HEK293 (cell line): ENCODE measurements at regions of chr1 and their contacts with region 1.

Region 1: DNA sequence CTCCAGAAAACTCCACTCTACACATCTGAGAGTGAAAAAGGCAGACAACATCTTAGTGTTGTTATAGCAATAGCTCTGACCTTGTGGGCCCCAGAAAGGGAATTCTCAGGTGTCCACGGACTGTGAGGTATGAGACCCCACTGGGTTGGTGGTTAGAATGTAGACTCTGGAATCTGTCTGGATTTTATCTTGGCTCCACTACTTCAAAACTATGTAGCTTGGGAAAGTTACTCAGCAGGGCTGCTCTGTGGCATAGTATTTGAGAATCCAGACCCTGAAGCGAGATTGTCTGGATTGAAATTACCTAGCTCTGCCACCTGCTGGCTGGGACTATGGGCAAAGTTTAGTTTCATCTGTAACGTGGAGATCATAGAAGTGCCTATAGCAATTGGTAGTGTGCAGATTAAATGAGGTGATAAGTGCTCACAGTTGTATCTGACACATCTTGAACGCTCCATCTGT is 25.8 kb downstream of the PRDM2 start:
- H3K4me3 ChIP-seq: no peak overlapping the region
- H3K27ac ChIP-seq: no peak overlapping the region
- H3K4me1 ChIP-seq: peaks cover 8% of the 10 kb centered on the region; the same call in 1 of the 2 replicates
- CTCF ChIP-seq: peak; percentile 19; the same call in 1 of the 2 replicates

Region 2: GRCh38 chr1:13487143-13487868 is 238.4 kb before region 1 on chr1:
- CTCF ChIA-PET with region 1: no interaction called
- POLR2A ChIA-PET with region 1: no interaction called
- H3K4me3 ChIP-seq: no peak overlapping the region
- H3K27ac ChIP-seq: no peak overlapping the region
- H3K4me1 ChIP-seq: no peaks in the 10 kb centered on the region
- CTCF ChIP-seq: no peak

Region 3: DNA sequence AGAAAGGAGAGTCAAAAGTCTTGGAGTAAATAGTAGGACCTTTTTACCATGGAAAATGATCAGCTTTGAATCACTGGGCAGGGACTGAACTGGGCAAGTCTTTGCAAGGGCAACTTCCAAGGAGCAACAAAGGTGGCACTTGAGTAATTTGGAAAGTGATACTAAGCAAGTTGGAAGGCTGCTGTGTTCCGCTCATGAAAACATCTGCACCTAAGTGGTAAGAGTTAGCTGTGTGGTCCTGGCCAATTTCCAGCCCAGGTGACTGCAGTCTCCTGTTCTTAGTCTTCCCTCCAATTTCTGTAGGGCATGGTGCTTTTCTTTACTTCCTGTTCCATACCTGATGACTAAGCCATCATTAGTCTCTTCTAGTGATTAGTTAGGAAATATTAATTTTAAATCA is 61.3 kb before region 1 on chr1:
- CTCF ChIA-PET with region 1: interaction called, 17 read pairs
- POLR2A ChIA-PET with region 1: no interaction called
- H3K4me3 ChIP-seq: no peak overlapping the region
- H3K27ac ChIP-seq: no peak overlapping the region
- H3K4me1 ChIP-seq: no peaks in the 10 kb centered on the region
- CTCF ChIP-seq: no peak

Region 4: DNA sequence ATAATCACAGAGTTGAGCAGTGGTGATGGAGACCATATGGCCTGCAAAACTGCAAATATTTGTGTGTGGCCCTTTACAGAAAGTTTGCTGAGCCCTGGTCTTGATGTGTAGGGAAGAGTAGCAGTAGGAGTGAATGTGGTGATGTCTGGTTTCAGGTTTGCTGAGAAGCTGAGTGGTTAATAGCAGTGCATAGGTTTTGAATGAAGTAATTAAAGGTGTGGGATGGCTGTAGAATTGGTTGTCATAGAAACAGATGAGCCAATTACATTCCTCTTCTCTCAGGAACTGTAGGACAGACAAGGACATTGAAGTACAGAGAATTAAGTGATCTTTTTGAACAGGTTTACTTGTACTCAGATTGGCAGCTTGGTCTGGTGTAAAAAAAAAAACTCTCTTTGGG is 11.7 kb after region 1 on chr1:
- CTCF ChIA-PET with region 1: interaction called, 12 read pairs
- POLR2A ChIA-PET with region 1: no interaction called
- H3K4me3 ChIP-seq: no peak overlapping the region
- H3K27ac ChIP-seq: no peak overlapping the region
- H3K4me1 ChIP-seq: no peaks in the 10 kb centered on the region
- CTCF ChIP-seq: no peak